Endothelial cell of umbilical vein (primary cell): ENCODE measurements at regions of chr6 and their contacts with region 1.

Region 1: GRCh38 chr6:81865712-81866111 is 113.2 kb upstream of the TENT5A start:
- DNase-seq: peak; percentile 88
- H3K4me3 ChIP-seq: no peak overlapping the region
- H3K27ac ChIP-seq: peak overlapping the region; percentile 59
- H3K4me1 ChIP-seq: peaks cover 27% of the 10 kb centered on the region
- H3K27me3 ChIP-seq: no peaks in the 10 kb centered on the region
- CTCF ChIP-seq: no peak
- POLR2A ChIP-seq: no peak

Region 2: GRCh38 chr6:81853982-81854381 is 11.7 kb before region 1 on chr6:
- CTCF ChIA-PET with region 1: no interaction called
- POLR2A ChIA-PET with region 1: no interaction called
- dilution Hi-C with region 1: no loop called
- intact Hi-C with region 1: loop called (anchors 1 kb)
- DNase-seq: no peak
- H3K4me3 ChIP-seq: no peak overlapping the region
- H3K27ac ChIP-seq: peak overlapping the region; percentile 34
- H3K4me1 ChIP-seq: peaks cover 16% of the 10 kb centered on the region
- H3K27me3 ChIP-seq: no peaks in the 10 kb centered on the region
- CTCF ChIP-seq: no peak
- POLR2A ChIP-seq: no peak

Region 3: GRCh38 chr6:81894788-81895271 is 29.1 kb after region 1 on chr6:
- CTCF ChIA-PET with region 1: interaction called, 3 read pairs
- POLR2A ChIA-PET with region 1: no interaction called
- dilution Hi-C with region 1: no loop called
- intact Hi-C with region 1: loop called (anchors 2 kb)
- DNase-seq: no peak
- H3K4me3 ChIP-seq: no peak overlapping the region
- H3K27ac ChIP-seq: no peak overlapping the region
- H3K4me1 ChIP-seq: peaks cover 8% of the 10 kb centered on the region
- H3K27me3 ChIP-seq: no peaks in the 10 kb centered on the region
- CTCF ChIP-seq: no peak
- POLR2A ChIP-seq: no peak

Region 4: DNA sequence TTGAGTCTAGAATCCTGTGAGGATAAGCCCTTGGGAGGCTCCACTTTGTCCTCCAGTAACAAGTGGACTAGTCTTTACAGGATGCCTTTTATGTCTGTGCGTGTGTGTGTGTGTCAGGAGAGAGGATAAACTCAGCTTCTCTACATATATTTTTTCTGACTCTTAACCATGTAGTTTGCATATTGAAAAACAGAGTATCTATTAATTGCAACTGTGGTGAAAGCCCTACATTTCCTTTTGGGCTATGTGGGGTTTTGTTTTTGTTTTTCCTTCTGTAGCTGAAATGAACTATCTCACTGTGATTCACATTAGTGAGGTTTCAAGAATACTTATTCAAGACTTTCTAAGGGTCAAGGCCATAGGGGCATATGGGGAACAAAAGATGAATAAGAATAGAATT is 515.6 kb after region 1 on chr6:
- CTCF ChIA-PET with region 1: no interaction called
- POLR2A ChIA-PET with region 1: no interaction called
- dilution Hi-C with region 1: no loop called
- intact Hi-C with region 1: no loop called
- DNase-seq: no peak
- H3K4me3 ChIP-seq: no peak overlapping the region
- H3K27ac ChIP-seq: no peak overlapping the region
- H3K4me1 ChIP-seq: no peaks in the 10 kb centered on the region
- H3K27me3 ChIP-seq: peaks cover 0 to 2% of the 10 kb centered on the region in 2 experiments
- CTCF ChIP-seq: no peak
- POLR2A ChIP-seq: no peak